ENCODE measurements at regions of chr7 and their contacts with region 1.

Region 1: DNA sequence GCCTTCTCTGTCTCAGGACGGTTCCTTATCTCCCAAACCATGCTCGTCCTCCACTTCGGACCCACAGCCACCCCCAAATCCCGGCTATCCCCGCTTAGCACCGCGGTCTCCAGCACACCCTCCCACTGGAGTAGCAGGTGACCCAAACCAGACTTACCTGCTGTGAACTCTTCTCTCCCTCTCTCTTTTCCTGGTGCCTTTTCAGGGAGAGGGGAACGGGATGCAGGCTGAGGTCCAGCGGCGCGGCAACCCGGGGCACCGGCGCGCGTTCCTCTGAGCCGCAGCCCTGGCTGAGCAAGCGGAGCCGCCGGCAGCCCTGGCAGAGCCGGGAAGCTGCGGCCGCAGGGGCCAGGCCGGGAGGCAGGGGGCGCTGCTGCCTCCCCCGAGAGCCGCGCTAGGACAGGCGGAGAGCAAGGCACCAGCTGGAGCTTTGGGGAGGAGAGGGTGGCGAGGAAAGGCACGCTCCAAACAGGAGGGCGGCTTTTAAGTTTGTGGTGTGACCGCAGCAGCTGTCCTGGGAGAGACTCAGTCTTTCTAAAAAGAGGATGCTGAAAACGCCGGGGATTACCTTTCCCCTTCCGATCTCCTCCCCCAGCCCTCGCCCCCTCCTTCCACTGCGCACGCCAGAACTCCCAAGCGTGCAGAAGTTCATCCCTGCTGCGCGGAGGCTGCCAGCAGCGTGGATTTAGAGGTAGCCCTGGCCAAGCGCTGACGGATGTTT is at the start of gene SEMA3D:
- DNase-seq: peak; percentile 57
- H3K4me3 ChIP-seq: peak within 1 kb of the TSS; percentile 72
- H3K27ac ChIP-seq: no peak within 1 kb of the TSS
- H3K27me3 ChIP-seq: no peaks in the 10 kb centered on the region
- CTCF ChIP-seq: peak; percentile 80

Region 2: DNA sequence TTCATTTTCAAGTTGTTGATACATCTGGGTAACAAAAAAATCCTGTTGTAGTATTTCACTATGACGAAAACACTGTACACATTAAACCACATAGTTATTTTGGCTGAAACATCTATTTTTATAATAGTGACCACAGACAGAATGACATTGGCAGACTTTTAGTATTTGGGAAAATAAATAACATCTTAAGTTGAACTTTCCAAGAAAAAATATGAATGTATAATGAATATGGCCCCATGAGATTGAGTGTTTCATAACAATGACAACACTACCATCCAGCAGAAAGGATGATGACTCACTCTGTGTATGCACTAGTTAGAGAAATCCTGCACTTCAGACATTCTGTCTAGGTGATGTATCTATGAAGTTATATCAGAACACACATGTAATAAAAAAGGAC is 117.9 kb before region 1 on chr7:
- in situ Hi-C with region 1: loop called (anchors 25 kb)
- DNase-seq: peak; percentile 77
- H3K4me3 ChIP-seq: no peak overlapping the region
- H3K27ac ChIP-seq: no peak overlapping the region
- H3K27me3 ChIP-seq: no peaks in the 10 kb centered on the region
- CTCF ChIP-seq: no peak

Region 3: GRCh38 chr7:85274454-85274853 is 87.8 kb after region 1 on chr7:
- in situ Hi-C with region 1: no loop called
- DNase-seq: no peak
- H3K4me3 ChIP-seq: no peak overlapping the region
- H3K27ac ChIP-seq: no peak overlapping the region
- H3K27me3 ChIP-seq: no peaks in the 10 kb centered on the region
- CTCF ChIP-seq: no peak